HepG2 (cell line): ENCODE measurements at regions of chr9 and their contacts with region 1.

Region 1: GRCh38 chr9:112556497-112557085 is 70.0 kb downstream of the KIAA1958 start:
- DNase-seq: no peak
- ATAC-seq: no peak
- H3K4me3 ChIP-seq: no peak overlapping the region
- H3K27ac ChIP-seq: no peak overlapping the region
- H3K4me1 ChIP-seq: peaks cover 25% of the 10 kb centered on the region
- H3K27me3 ChIP-seq: no peaks in the 10 kb centered on the region
- CTCF ChIP-seq: no peak
- EP300 ChIP-seq: no peak
- POLR2A ChIP-seq: no peak
- RAD21 ChIP-seq: no peak

Region 2: GRCh38 chr9:111957856-111958652 is 598.5 kb before region 1 on chr9:
- CTCF ChIA-PET with region 1: no interaction called
- POLR2A ChIA-PET with region 1: no interaction called
- in situ Hi-C with region 1: no loop called
- intact Hi-C with region 1: no loop called
- DNase-seq: no peak
- ATAC-seq: no peak
- H3K4me3 ChIP-seq: no peak overlapping the region
- H3K27ac ChIP-seq: no peak overlapping the region
- H3K4me1 ChIP-seq: peaks cover 22% of the 10 kb centered on the region
- H3K27me3 ChIP-seq: no peaks in the 10 kb centered on the region
- CTCF ChIP-seq: no peak
- EP300 ChIP-seq: no peak
- POLR2A ChIP-seq: no peak
- RAD21 ChIP-seq: no peak

Region 3: GRCh38 chr9:112570671-112571167 is 14.1 kb after region 1 on chr9:
- CTCF ChIA-PET with region 1: no interaction called
- POLR2A ChIA-PET with region 1: no interaction called
- in situ Hi-C with region 1: no loop called
- intact Hi-C with region 1: loop called (anchors 2 kb)
- DNase-seq: peak; percentile 89
- ATAC-seq: peak; percentile 99
- H3K4me3 ChIP-seq: no peak overlapping the region; a peak in 1 of 6 replicates
- H3K27ac ChIP-seq: peak overlapping the region; percentile 26
- H3K4me1 ChIP-seq: peaks cover 38% of the 10 kb centered on the region
- H3K27me3 ChIP-seq: no peaks in the 10 kb centered on the region
- CTCF ChIP-seq: no peak
- EP300 ChIP-seq: peak in 1 of 2 experiments; percentile 71; a peak in 1 of 4 replicates
- POLR2A ChIP-seq: no peak
- RAD21 ChIP-seq: peak; percentile 51; the same call in 1 of the 2 replicates

Region 4: GRCh38 chr9:112719241-112719691 is 162.7 kb after region 1 on chr9:
- CTCF ChIA-PET with region 1: no interaction called
- POLR2A ChIA-PET with region 1: no interaction called
- in situ Hi-C with region 1: no loop called
- intact Hi-C with region 1: no loop called
- DNase-seq: no peak
- ATAC-seq: no peak
- H3K4me3 ChIP-seq: no peak overlapping the region
- H3K27ac ChIP-seq: no peak overlapping the region
- H3K4me1 ChIP-seq: peaks cover 23% of the 10 kb centered on the region
- H3K27me3 ChIP-seq: no peaks in the 10 kb centered on the region
- CTCF ChIP-seq: no peak
- EP300 ChIP-seq: no peak
- POLR2A ChIP-seq: no peak
- RAD21 ChIP-seq: no peak